B cell (primary cell): ENCODE measurements at regions of chr16 and their contacts with region 1.

Region 1: GRCh38 chr16:72008424-72009216 is at the start of gene DHODH:
- DNase-seq: peak; percentile 99
- ATAC-seq: peak; percentile 98
- H3K4me3 ChIP-seq: peak within 1 kb of the TSS; percentile 56 to 96 (median 66)
- H3K4me3 Mint-ChIP-seq: peak within 1 kb of the TSS; percentile 95
- H3K27ac ChIP-seq: peak within 1 kb of the TSS; percentile 73 to 85
- H3K27ac Mint-ChIP-seq: peak within 1 kb of the TSS; percentile 94
- H3K4me1 ChIP-seq: peaks cover 0 to 12% of the 10 kb centered on the region in 2 donors
- H3K4me1 Mint-ChIP-seq: peaks cover 16% of the 10 kb centered on the region
- H3K27me3 ChIP-seq: no peaks in the 10 kb centered on the region
- H3K27me3 Mint-ChIP-seq: peaks cover 4% of the 10 kb centered on the region
- CTCF ChIP-seq: no peak
- total RNA-seq, gene DHODH: 11.3 and 14.7 TPM in 2 replicates

Region 2: GRCh38 chr16:71461686-71462648 is 546.7 kb before region 1 on chr16 and contains the start of gene ZNF23:
- CTCF ChIA-PET with region 1: no interaction called
- POLR2A ChIA-PET with region 1: no interaction called
- intact Hi-C with region 1: loop called (anchors 1 kb)
- DNase-seq: peak; percentile 91
- ATAC-seq: peak; percentile 97
- H3K4me3 ChIP-seq: peak within 1 kb of the TSS; percentile 62 to 99 (median 96)
- H3K4me3 Mint-ChIP-seq: peak within 1 kb of the TSS; percentile 96
- H3K27ac ChIP-seq: peak within 1 kb of the TSS; percentile 91 to 95
- H3K27ac Mint-ChIP-seq: peak within 1 kb of the TSS; percentile 95
- H3K4me1 ChIP-seq: peaks cover 14 to 16% of the 10 kb centered on the region in 2 donors
- H3K4me1 Mint-ChIP-seq: peaks cover 32% of the 10 kb centered on the region
- H3K27me3 ChIP-seq: no peaks in the 10 kb centered on the region
- H3K27me3 Mint-ChIP-seq: no peaks in the 10 kb centered on the region
- CTCF ChIP-seq: peak; percentile 36
- total RNA-seq, gene ZNF23: 15.0 and 18.3 TPM in 2 replicates

Region 3: GRCh38 chr16:71985262-71985974 is 23.2 kb before region 1 on chr16:
- CTCF ChIA-PET with region 1: no interaction called
- POLR2A ChIA-PET with region 1: no interaction called
- intact Hi-C with region 1: no loop called
- DNase-seq: no peak
- ATAC-seq: no peak
- H3K4me3 ChIP-seq: no peak overlapping the region
- H3K4me3 Mint-ChIP-seq: no peak overlapping the region
- H3K27ac ChIP-seq: no peak overlapping the region
- H3K27ac Mint-ChIP-seq: no peak overlapping the region
- H3K4me1 ChIP-seq: no peaks in the 10 kb centered on the region
- H3K4me1 Mint-ChIP-seq: no peaks in the 10 kb centered on the region
- H3K27me3 ChIP-seq: peaks cover 0 to 6% (median 5%) of the 10 kb centered on the region in 4 experiments
- H3K27me3 Mint-ChIP-seq: peaks cover 37% of the 10 kb centered on the region
- CTCF ChIP-seq: no peak